ENCODE measurements at regions of chr5 and their contacts with region 1.

Region 1: DNA sequence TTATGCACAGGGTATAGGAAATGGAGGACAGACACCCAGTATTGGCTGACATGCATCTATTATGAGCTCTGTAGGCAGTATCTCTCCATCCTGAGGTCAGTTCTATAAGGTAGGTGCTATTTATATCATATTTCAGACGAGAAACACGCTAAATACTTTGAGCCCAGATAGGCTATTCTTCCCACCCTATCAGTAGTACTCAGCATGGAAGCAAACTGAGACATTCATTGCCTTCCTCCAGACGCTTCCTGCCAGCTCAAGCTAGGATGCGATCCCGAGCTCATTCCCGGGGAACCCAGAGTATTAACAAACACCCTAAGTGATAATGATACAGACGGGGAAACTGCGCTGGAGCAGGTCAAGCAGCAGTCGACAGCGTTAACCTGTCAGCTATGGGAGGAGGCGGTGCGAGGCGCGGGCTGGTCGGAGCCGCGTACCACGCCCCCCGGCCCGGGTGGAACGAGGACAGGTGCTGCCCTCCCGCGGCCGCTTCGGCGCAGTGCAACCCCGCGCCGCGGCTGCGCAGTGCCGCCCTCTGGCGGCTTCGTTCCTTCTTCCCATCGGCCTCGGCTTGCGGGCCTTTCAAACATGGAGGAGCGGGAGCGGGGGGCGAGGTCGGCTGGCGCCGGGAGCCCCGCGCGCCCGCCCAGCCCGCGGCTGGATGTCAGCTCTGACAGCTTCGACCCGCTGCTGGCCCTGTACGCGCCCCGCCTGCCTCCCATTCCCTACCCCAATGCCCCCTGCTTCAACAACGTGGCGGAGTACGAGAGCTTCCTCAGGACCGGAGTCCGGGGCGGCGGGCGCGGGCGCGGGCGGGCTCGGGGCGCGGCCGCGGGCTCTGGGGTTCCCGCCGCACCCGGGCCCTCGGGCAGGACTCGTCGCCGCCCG is at the start of gene LSM11:
- DNase-seq: peak; percentile 82
- H3K4me3 ChIP-seq: peak within 1 kb of the TSS; percentile 71
- H3K27ac ChIP-seq: peak within 1 kb of the TSS; percentile 76
- H3K4me1 ChIP-seq: peaks cover 4% of the 10 kb centered on the region
- H3K27me3 ChIP-seq: no peaks in the 10 kb centered on the region
- CTCF ChIP-seq: peak; percentile 84
- total RNA-seq, gene LSM11: 3.6 and 4.2 TPM in 2 replicates

Region 2: DNA sequence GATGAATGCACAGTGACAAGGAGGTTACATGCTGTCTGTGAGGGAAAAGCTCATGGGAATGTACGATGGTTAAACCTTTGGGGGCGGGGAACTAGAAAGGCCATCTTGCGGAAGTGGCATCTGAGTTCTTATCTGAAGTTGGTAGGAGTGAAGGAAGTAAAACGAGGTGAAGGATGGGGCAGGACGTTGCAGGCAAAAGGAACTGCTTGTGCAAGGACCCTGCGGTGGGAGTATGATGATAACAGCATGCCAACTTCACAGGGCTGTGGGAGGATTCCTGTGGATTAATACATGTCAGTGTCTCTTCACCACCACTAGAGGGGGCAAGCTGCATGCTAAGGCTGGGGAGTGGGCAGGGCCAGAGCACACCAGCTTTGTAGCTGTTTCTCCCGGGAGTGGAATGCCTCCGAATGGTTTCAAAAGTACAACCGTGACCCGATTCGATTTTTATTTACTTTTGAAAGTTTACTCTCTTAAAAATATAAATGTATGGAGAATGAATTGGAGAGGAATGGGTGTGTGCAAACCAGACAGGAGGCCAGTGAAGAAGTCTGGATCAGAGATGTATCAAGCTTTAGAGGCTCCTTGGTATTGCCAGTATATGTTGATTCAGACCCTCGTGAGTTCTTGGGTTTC is 415.0 kb before region 1 on chr5:
- CTCF ChIA-PET with region 1: interaction called, 4 read pairs
- POLR2A ChIA-PET with region 1: no interaction called
- intact Hi-C with region 1: loop called (anchors 10 kb)
- DNase-seq: peak; percentile 76
- H3K4me3 ChIP-seq: peak overlapping the region; percentile 14
- H3K27ac ChIP-seq: no peak overlapping the region
- H3K4me1 ChIP-seq: no peaks in the 10 kb centered on the region
- H3K27me3 ChIP-seq: no peaks in the 10 kb centered on the region
- CTCF ChIP-seq: peak; percentile 83

Region 3: DNA sequence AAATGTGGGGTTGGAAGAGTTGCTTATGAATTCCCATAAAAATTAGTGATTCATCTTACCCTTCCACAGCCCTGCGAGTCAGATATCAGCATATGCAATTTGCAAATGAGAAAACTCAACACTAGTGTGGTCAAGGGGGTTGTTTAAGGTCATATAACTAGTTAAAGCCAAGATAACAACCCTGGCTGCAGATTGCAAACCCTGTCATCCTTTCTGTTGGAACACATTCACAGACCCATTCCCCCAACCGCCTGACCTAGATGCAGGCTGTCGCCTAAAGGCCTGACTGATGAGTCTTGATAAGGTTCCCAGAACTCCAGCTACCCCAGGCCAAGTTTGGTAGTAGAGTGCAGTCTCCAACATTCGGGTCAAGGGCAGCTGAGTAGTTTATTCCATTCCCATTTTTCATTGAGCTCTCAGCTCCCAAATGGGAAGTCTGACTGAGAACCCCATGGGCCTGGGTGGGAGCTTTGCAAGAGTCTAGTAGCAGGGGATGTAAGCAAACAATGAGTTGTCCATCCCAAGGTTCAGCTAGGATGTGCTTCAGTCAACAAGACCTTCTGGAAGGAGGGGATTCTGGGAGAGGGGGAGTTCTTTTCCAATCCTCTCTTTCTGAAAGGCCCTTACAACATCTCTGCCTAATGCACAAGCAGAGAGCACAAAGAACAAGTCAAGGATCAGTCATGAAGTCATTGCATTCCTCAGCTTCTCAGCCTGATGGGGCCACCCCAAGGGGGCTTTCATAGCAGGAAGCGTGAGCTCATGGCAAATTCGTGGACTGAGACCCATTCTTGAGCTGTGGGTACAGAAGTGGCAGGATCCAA is 208.2 kb before region 1 on chr5:
- CTCF ChIA-PET with region 1: no interaction called
- POLR2A ChIA-PET with region 1: no interaction called
- intact Hi-C with region 1: no loop called
- DNase-seq: no peak
- H3K4me3 ChIP-seq: no peak overlapping the region
- H3K27ac ChIP-seq: no peak overlapping the region
- H3K4me1 ChIP-seq: no peaks in the 10 kb centered on the region
- H3K27me3 ChIP-seq: no peaks in the 10 kb centered on the region
- CTCF ChIP-seq: no peak

Region 4: DNA sequence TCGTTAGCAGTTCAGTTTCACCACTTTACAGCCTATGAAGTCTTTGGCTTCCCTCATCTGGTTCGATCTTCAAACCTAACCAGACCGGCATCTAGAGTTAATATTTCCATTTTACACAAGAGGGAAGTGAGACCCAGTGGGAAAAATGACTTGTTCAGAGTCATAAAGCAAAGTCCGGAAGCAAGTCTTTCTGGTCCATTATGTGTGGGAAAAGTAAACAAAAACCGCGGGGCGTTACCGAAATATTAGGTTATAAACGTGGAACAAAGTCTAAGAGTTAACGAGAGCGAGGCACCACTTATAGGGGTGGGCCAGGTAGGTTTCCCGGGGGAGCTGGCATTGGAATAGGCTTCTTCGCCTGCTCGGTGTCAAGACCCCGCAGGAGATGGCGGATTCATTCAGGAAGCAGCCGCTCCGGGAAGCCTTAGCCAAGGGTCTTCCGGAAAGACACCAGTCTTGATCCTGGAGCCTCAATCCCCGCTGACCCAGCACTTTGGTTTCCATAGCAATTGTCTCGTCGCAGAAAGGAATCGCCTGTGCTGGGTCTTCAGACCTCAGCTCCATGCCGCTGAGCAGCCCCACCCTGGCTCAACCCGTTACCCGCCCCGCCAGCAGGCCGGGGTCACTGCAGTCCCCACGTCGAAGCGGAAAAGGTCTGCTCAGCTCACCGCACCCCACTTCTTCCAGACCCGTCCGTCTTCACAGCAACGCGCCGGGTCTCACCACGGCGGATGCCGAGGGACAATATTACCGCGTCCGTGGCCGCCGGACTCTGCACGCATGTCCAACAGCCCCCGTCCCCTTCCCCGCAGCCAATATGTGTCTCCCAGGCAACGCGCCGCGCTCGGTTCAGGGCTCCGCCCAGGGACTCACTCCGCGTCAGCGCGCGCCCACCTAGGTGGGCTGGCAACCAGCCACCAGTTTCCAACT is 72.5 kb before region 1 on chr5 and contains the start of gene C5orf52:
- CTCF ChIA-PET with region 1: interaction called, 5 read pairs
- POLR2A ChIA-PET with region 1: no interaction called
- intact Hi-C with region 1: loop called (anchors 2 kb)
- DNase-seq: peak; percentile 37
- H3K4me3 ChIP-seq: peak within 1 kb of the TSS; percentile 47
- H3K27ac ChIP-seq: no peak within 1 kb of the TSS
- H3K4me1 ChIP-seq: peaks cover 7% of the 10 kb centered on the region
- H3K27me3 ChIP-seq: peaks cover 10% of the 10 kb centered on the region
- CTCF ChIP-seq: no peak
- total RNA-seq, gene C5orf52: not detected in 2 replicates

Region 5: GRCh38 chr5:157718519-157718918 is 24.9 kb before region 1 on chr5:
- CTCF ChIA-PET with region 1: no interaction called
- POLR2A ChIA-PET with region 1: no interaction called
- intact Hi-C with region 1: no loop called
- DNase-seq: peak; percentile 67
- H3K4me3 ChIP-seq: no peak overlapping the region
- H3K27ac ChIP-seq: no peak overlapping the region
- H3K4me1 ChIP-seq: no peaks in the 10 kb centered on the region
- H3K27me3 ChIP-seq: no peaks in the 10 kb centered on the region
- CTCF ChIP-seq: peak; percentile 56

Region 6: GRCh38 chr5:157731272-157732129 is 11.9 kb before region 1 on chr5 and contains the start of gene THG1L:
- CTCF ChIA-PET with region 1: interaction called, 10 read pairs
- POLR2A ChIA-PET with region 1: interaction called, 4 read pairs
- intact Hi-C with region 1: no loop called
- DNase-seq: peak; percentile 98
- H3K4me3 ChIP-seq: peak within 1 kb of the TSS; percentile 71
- H3K27ac ChIP-seq: peak within 1 kb of the TSS; percentile 89
- H3K4me1 ChIP-seq: peaks cover 4% of the 10 kb centered on the region
- H3K27me3 ChIP-seq: no peaks in the 10 kb centered on the region
- CTCF ChIP-seq: no peak
- total RNA-seq, gene THG1L: 11.8 and 13.0 TPM in 2 replicates

Measured in A673 (cell line).